Transverse colon (tissue), 4 donors: ENCODE measurements at regions of chr3 and their contacts with region 1.

Region 1: DNA sequence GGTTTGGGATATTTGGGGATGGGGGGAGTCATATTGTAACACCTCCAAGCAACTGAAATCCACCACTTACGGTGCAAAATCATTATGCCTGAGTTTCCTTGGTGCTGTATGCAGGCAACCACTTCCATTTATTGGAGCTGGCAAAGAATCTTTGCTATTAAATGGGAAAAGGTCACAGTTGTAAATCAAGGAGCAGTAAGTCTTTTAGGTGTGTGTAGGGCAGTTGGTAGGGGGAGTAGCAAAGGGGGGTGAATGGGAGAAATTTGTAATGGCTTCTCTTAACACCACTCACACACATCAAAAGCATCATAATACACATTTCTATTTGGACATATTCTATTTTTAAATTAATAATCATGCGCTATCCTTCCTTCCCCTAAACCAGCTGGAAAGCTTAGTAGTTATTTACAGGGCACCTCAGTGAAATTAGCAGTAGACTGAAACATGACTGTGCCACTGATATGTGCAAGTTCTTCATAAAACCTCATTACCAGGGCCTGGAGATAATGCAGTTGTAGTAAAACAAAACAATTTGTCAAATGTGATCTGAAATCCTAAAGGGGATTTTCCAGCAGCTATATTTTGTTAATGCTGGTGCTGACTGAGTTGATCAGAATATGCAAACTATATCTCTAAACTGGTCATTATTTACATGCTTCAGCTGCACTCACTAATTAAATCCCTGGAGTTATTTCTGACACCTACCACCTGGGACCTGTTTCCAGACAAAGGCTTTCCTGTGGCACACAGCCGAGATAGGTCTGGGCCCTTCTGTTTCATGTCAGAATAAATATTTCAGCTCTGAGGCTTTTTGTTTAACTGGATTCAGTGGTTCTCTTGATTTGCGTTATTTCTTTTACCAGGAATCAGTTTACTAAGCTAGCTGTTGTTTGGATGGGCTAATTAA is 90.1 kb downstream of the B3GALNT1 start:
- DNase-seq: no peak
- H3K4me3 ChIP-seq: no peak overlapping the region
- H3K27ac ChIP-seq: no peak overlapping the region
- H3K4me1 ChIP-seq: no peaks in the 10 kb centered on the region
- H3K27me3 ChIP-seq: no peaks in the 10 kb centered on the region
- CTCF ChIP-seq: no peak
- EP300 ChIP-seq: no peak
- POLR2A ChIP-seq: no peak

Region 2: DNA sequence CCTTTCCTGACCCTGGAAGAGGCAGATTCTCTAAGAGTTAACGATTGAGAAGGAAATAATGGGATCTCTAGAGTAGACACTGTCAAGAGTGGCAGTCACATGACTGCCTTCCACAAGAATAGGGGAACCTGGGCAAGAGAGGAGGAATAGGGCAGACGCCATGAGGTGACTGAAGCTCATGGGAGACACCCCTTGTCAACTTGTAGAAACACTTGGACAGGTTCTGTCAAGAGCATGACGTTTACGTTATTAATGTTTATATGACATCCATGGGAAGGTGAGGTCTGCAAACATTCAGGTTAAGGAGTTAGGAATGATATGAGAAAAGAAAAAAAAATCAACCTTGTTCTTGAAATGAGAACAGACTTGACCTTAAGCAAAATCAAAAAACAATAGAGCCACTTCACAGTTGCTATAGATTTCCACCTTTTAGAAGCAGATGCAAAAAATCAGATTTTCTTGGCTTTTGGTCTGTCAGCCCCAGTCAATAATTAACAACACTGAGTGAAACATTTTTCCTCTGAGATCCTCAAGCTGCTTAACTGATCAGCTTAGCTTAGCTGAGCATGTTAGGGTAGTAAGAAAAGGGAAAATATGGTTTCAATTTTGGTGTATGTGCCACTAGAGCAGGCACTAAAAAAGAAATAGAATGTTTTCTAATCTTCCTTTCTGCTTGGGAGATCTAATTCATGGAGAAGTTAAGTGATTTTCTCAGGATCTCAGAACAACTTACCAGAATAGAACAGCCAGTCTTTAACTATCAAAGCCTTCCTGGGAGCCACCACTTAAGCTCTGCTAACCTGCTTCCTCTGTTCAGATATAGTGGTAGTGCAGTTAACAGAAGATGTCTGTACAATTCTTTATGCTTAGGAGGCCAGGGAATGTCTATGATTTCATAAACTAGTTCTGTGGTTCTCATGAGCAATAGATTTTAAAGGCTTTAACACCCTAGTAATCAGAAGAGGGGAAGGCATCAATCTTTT is 26.8 kb before region 1 on chr3:
- in situ Hi-C with region 1: no loop called
- intact Hi-C with region 1: no loop called
- DNase-seq: no peak
- H3K4me3 ChIP-seq: no peak overlapping the region
- H3K27ac ChIP-seq: no peak overlapping the region
- H3K4me1 ChIP-seq: no peaks in the 10 kb centered on the region
- H3K27me3 ChIP-seq: no peaks in the 10 kb centered on the region
- CTCF ChIP-seq: no peak
- EP300 ChIP-seq: no peak
- POLR2A ChIP-seq: no peak

Region 3: DNA sequence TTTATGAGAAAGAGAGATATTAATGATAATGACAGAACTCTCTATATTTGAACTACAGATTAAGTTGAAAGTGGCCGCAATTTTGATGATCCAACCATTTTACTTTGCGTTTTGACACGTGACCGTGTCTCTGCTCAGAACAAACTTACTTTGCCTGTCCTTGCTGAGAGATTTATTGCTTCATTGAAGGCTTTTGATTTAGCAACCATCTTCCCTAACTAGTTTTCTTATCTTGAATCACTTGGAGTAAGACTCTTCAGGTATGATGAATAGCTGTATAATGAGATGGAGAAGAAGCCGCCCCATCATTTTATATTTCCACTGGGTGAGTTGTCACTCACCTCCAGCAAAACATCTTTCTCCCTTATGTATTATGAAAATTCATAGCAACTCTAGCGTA is 364.3 kb after region 1 on chr3:
- in situ Hi-C with region 1: no loop called
- intact Hi-C with region 1: loop called (anchors 5 kb)
- DNase-seq: no peak
- H3K4me3 ChIP-seq: no peak overlapping the region
- H3K27ac ChIP-seq: no peak overlapping the region
- H3K4me1 ChIP-seq: no peaks in the 10 kb centered on the region
- H3K27me3 ChIP-seq: no peaks in the 10 kb centered on the region
- CTCF ChIP-seq: no peak
- EP300 ChIP-seq: no peak
- POLR2A ChIP-seq: no peak